ENCODE measurements at regions of chr7 and their contacts with region 1.

Region 1: GRCh38 chr7:9645756-9646155 is 1212.3 kb downstream of the NXPH1 start:
- DNase-seq: no peak
- H3K4me3 Mint-ChIP-seq: no peak overlapping the region
- H3K27ac Mint-ChIP-seq: no peak overlapping the region
- H3K4me1 Mint-ChIP-seq: no peaks in the 10 kb centered on the region
- H3K27me3 Mint-ChIP-seq: peaks cover 37% of the 10 kb centered on the region
- CTCF ChIP-seq: no peak

Region 2: DNA sequence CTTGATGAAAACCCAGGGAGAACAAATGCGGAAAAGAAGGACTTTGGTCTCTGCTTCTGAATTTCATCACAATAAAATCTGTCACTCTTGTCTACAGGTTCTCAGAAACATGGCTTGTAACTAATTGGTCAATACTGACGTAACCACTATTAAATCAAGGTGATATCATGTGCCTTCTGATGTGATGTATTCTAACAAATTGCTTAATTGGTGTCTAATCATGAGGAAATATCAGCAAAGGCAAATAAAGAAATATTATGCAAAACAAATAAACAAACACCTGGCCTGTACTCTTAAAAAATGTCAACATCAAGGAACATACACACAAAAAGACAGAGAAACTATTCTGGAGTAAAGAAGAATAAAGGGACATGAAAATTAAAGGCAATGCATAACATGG is 47.3 kb before region 1 on chr7:
- CTCF ChIA-PET with region 1: no interaction called
- POLR2A ChIA-PET with region 1: no interaction called
- intact Hi-C with region 1: loop called (anchors 2 kb)
- DNase-seq: no peak
- H3K4me3 Mint-ChIP-seq: no peak overlapping the region
- H3K27ac Mint-ChIP-seq: no peak overlapping the region
- H3K4me1 Mint-ChIP-seq: no peaks in the 10 kb centered on the region
- H3K27me3 Mint-ChIP-seq: peaks cover 44% of the 10 kb centered on the region
- CTCF ChIP-seq: no peak

Region 3: DNA sequence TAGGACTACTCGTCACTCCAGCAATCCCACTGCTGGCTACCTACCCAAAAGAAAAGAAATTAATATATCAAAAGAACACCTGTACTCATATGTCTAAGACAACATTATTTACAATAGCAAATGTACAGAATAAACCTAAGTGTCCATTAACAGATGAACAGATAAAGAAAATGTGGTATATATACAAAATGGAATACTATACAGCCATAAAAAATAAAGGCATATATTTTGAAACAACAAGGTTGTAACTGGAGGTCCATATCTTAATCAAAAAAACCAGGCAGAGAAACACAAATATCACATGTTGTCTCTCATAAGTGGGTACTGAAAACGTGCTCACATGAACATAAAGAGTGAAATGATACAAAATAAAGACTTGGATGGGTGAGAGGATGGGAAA is 254.6 kb after region 1 on chr7:
- CTCF ChIA-PET with region 1: no interaction called
- POLR2A ChIA-PET with region 1: no interaction called
- intact Hi-C with region 1: no loop called
- DNase-seq: no peak
- H3K4me3 Mint-ChIP-seq: no peak overlapping the region
- H3K27ac Mint-ChIP-seq: no peak overlapping the region
- H3K4me1 Mint-ChIP-seq: no peaks in the 10 kb centered on the region
- H3K27me3 Mint-ChIP-seq: peaks cover 12% of the 10 kb centered on the region
- CTCF ChIP-seq: no peak

Measured in MCF 10A (cell line).